ENCODE measurements at regions of chr1 and their contacts with region 1.

Region 1: GRCh38 chr1:116737020-116737854 is 17.0 kb upstream of the CD2 start:
- DNase-seq: peak; percentile 60 to 89 (median 75)
- ATAC-seq: peak; percentile 60
- H3K4me3 ChIP-seq: peak overlapping the region; percentile 23 to 25
- H3K4me3 Mint-ChIP-seq: peak overlapping the region; percentile 67
- H3K27ac ChIP-seq: peak overlapping the region; percentile 59 to 92
- H3K27ac Mint-ChIP-seq: peak overlapping the region; percentile 96
- H3K4me1 ChIP-seq: peaks cover 30% of the 10 kb centered on the region
- H3K4me1 Mint-ChIP-seq: peaks cover 44% of the 10 kb centered on the region
- H3K27me3 ChIP-seq: no peaks in the 10 kb centered on the region
- H3K27me3 Mint-ChIP-seq: no peaks in the 10 kb centered on the region
- CTCF ChIP-seq: peak; percentile 87

Region 2: GRCh38 chr1:116724765-116725375 is 12.4 kb before region 1 on chr1:
- CTCF ChIA-PET with region 1: interaction called, 36 read pairs
- POLR2A ChIA-PET with region 1: interaction called, 3 read pairs
- intact Hi-C with region 1: no loop called
- DNase-seq: peak; percentile 52 to 86 (median 81)
- ATAC-seq: peak; percentile 75
- H3K4me3 ChIP-seq: no peak overlapping the region
- H3K4me3 Mint-ChIP-seq: no peak overlapping the region
- H3K27ac ChIP-seq: no peak overlapping the region
- H3K27ac Mint-ChIP-seq: no peak overlapping the region
- H3K4me1 ChIP-seq: no peaks in the 10 kb centered on the region
- H3K4me1 Mint-ChIP-seq: peaks cover 15% of the 10 kb centered on the region
- H3K27me3 ChIP-seq: no peaks in the 10 kb centered on the region
- H3K27me3 Mint-ChIP-seq: no peaks in the 10 kb centered on the region
- CTCF ChIP-seq: peak; percentile 97

Region 3: GRCh38 chr1:116763787-116764465 is 26.7 kb after region 1 on chr1:
- CTCF ChIA-PET with region 1: interaction called, 203 read pairs
- POLR2A ChIA-PET with region 1: interaction called, 130 read pairs
- intact Hi-C with region 1: loop called (anchors 1 kb)
- DNase-seq: peak in 4 of 9 experiments; percentile 45 to 74 (median 58)
- ATAC-seq: peak; percentile 10
- H3K4me3 ChIP-seq: peak overlapping the region; percentile 18 to 22
- H3K4me3 Mint-ChIP-seq: peak overlapping the region; percentile 75
- H3K27ac ChIP-seq: peak overlapping the region; percentile 57 to 87
- H3K27ac Mint-ChIP-seq: peak overlapping the region; percentile 96
- H3K4me1 ChIP-seq: peaks cover 96% of the 10 kb centered on the region
- H3K4me1 Mint-ChIP-seq: peaks cover 96% of the 10 kb centered on the region
- H3K27me3 ChIP-seq: no peaks in the 10 kb centered on the region
- H3K27me3 Mint-ChIP-seq: no peaks in the 10 kb centered on the region
- CTCF ChIP-seq: peak; percentile 22

Region 4: GRCh38 chr1:116817582-116818064 is 80.4 kb after region 1 on chr1:
- CTCF ChIA-PET with region 1: interaction called, 186 read pairs
- POLR2A ChIA-PET with region 1: interaction called, 34 read pairs
- intact Hi-C with region 1: loop called (anchors 1 kb)
- DNase-seq: peak; percentile 43 to 89 (median 76)
- ATAC-seq: peak; percentile 71
- H3K4me3 ChIP-seq: no peak overlapping the region
- H3K4me3 Mint-ChIP-seq: peak overlapping the region; percentile 60
- H3K27ac ChIP-seq: no peak overlapping the region
- H3K27ac Mint-ChIP-seq: peak overlapping the region; percentile 70
- H3K4me1 ChIP-seq: peaks cover 19% of the 10 kb centered on the region
- H3K4me1 Mint-ChIP-seq: peaks cover 31% of the 10 kb centered on the region
- H3K27me3 ChIP-seq: no peaks in the 10 kb centered on the region
- H3K27me3 Mint-ChIP-seq: no peaks in the 10 kb centered on the region
- CTCF ChIP-seq: peak; percentile 80

Region 5: GRCh38 chr1:116878804-116879477 is 141.7 kb after region 1 on chr1:
- CTCF ChIA-PET with region 1: interaction called, 14 read pairs
- POLR2A ChIA-PET with region 1: interaction called, 3 read pairs
- intact Hi-C with region 1: loop called in 1 of 2 experiments (anchors 1 kb)
- DNase-seq: peak in 3 of 9 experiments; percentile 16 to 22 (median 16)
- ATAC-seq: no peak
- H3K4me3 ChIP-seq: peak overlapping the region in 1 of 2 experiments; percentile 24
- H3K4me3 Mint-ChIP-seq: no peak overlapping the region
- H3K27ac ChIP-seq: no peak overlapping the region
- H3K27ac Mint-ChIP-seq: no peak overlapping the region
- H3K4me1 ChIP-seq: peaks cover 35% of the 10 kb centered on the region
- H3K4me1 Mint-ChIP-seq: peaks cover 13% of the 10 kb centered on the region
- H3K27me3 ChIP-seq: no peaks in the 10 kb centered on the region
- H3K27me3 Mint-ChIP-seq: no peaks in the 10 kb centered on the region
- CTCF ChIP-seq: no peak

Region 6: DNA sequence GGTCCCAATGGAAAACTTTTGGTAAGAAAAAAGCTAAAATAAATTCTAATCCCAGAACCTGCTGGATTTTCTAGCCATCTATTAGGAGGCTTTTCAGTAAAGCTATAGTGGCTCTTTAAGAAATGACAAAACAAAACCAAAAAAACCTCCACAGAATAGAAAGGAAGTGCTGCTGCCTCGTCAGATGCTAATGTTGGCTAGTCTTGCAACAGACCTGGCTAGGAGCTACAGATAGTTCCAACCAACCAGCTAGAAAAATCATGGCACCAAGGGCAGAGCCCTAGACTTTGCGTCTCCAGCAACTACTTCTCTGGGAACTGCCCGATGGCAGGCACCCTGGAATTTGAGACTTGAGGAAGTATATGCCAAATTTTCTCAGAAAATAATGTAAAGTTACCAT is 271.9 kb after region 1 on chr1:
- CTCF ChIA-PET with region 1: interaction called, 5 read pairs
- POLR2A ChIA-PET with region 1: no interaction called
- intact Hi-C with region 1: loop called in 1 of 2 experiments (anchors 5 kb)
- DNase-seq: peak in 6 of 9 experiments; percentile 16 to 58 (median 38)
- ATAC-seq: peak; percentile 51
- H3K4me3 ChIP-seq: peak overlapping the region in 1 of 2 experiments; percentile 20
- H3K4me3 Mint-ChIP-seq: peak overlapping the region; percentile 64
- H3K27ac ChIP-seq: peak overlapping the region; percentile 9 to 50
- H3K27ac Mint-ChIP-seq: peak overlapping the region; percentile 92
- H3K4me1 ChIP-seq: peaks cover 53% of the 10 kb centered on the region
- H3K4me1 Mint-ChIP-seq: peaks cover 77% of the 10 kb centered on the region
- H3K27me3 ChIP-seq: no peaks in the 10 kb centered on the region
- H3K27me3 Mint-ChIP-seq: no peaks in the 10 kb centered on the region
- CTCF ChIP-seq: no peak

Region 7: GRCh38 chr1:117367047-117368018 is 630.1 kb after region 1 on chr1 and contains the start of gene MAN1A2:
- CTCF ChIA-PET with region 1: no interaction called
- POLR2A ChIA-PET with region 1: no interaction called
- intact Hi-C with region 1: loop called in 1 of 2 experiments (anchors 5 kb)
- DNase-seq: peak; percentile 31 to 87 (median 71)
- ATAC-seq: peak; percentile 61
- H3K4me3 ChIP-seq: peak within 1 kb of the TSS; percentile 57 to 84
- H3K4me3 Mint-ChIP-seq: peak within 1 kb of the TSS; percentile 95
- H3K27ac ChIP-seq: peak within 1 kb of the TSS; percentile 63 to 91
- H3K27ac Mint-ChIP-seq: peak within 1 kb of the TSS; percentile 97
- H3K4me1 ChIP-seq: peaks cover 52% of the 10 kb centered on the region
- H3K4me1 Mint-ChIP-seq: peaks cover 76% of the 10 kb centered on the region
- H3K27me3 ChIP-seq: no peaks in the 10 kb centered on the region
- H3K27me3 Mint-ChIP-seq: no peaks in the 10 kb centered on the region
- CTCF ChIP-seq: no peak
- total RNA-seq, gene MAN1A2: 46.5 to 49.3 TPM